ENCODE measurements at regions of chr14 and their contacts with region 1.

Region 1: DNA sequence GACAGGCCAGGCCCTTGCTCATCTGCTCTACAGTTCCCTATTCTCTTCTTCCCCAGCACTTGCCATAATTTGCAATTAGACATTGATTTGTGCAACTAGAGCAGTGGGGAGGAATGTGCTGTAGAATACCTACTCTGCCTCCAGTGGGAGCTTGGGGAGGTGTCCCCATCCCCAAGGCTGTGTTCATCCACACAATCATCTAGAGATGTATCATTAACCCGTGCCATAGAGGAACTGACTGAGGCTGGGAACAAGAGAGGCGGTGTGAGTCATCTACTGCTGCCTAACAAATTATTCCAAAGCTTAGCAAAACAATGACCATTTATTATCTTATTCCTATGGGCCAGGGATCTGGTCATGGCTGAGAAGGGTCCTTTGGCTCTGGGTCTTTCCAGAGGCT is 5.1 kb upstream of the OTUB2 start:
- DNase-seq: no peak
- CTCF ChIP-seq: no peak

Region 2: GRCh38 chr14:94009767-94010166 is 11.2 kb before region 1 on chr14:
- CTCF ChIA-PET with region 1: interaction called, 15 read pairs
- POLR2A ChIA-PET with region 1: no interaction called
- DNase-seq: peak; percentile 67
- CTCF ChIP-seq: no peak

Region 3: DNA sequence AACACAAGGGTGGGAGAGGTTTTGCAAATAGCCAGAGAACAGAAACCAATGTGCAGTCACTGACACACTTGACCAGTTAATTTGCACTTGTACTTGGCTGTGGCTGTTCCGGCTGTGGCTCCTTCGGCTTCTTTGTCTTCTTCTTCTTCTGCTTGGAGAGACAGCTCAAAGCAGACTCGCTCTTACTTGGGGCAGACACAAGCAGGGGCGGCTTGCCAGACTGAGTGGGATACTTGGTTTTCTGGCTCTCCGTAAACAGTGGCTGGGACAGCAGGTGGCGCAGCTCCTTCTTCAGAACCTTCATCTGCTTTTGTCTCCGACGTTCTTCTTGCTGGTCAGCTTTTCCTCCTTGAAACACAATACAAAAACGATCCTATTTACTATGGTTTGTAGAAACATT is 30.1 kb after region 1 on chr14:
- CTCF ChIA-PET with region 1: no interaction called
- POLR2A ChIA-PET with region 1: no interaction called
- DNase-seq: no peak
- CTCF ChIP-seq: peak; percentile 13